ENCODE measurements at regions of chr1 and their contacts with region 1.

Region 1: GRCh38 chr1:162381383-162381782 is at the start of gene C1orf226:
- DNase-seq: no peak
- H3K4me3 ChIP-seq: no peak within 1 kb of the TSS
- H3K27ac ChIP-seq: no peak within 1 kb of the TSS
- H3K4me1 ChIP-seq: 0 out of 7 replicates have a peak, but pooled peaks cover 0 to 1% (median 0%) of the 10 kb centered on the region in 4 experiments
- H3K27me3 ChIP-seq: no peaks in the 10 kb centered on the region
- CTCF ChIP-seq: no peak
- EP300 ChIP-seq: no peak
- POLR2A ChIP-seq: no peak
- RAD21 ChIP-seq: no peak
- total RNA-seq, gene C1orf226: 18.8 and 19.5 TPM in 2 replicates

Region 2: GRCh38 chr1:162367073-162367472 is 14.3 kb before region 1 on chr1:
- CTCF ChIA-PET with region 1: interaction called, 19 read pairs
- POLR2A ChIA-PET with region 1: interaction called, 6 read pairs
- DNase-seq: no peak
- H3K4me3 ChIP-seq: no peak overlapping the region
- H3K27ac ChIP-seq: no peak overlapping the region
- H3K4me1 ChIP-seq: no peaks in the 10 kb centered on the region
- H3K27me3 ChIP-seq: no peaks in the 10 kb centered on the region
- CTCF ChIP-seq: no peak
- EP300 ChIP-seq: no peak
- POLR2A ChIP-seq: no peak
- RAD21 ChIP-seq: no peak

Region 3: GRCh38 chr1:162444903-162445302 is 63.5 kb after region 1 on chr1:
- CTCF ChIA-PET with region 1: no interaction called
- POLR2A ChIA-PET with region 1: no interaction called
- DNase-seq: no peak
- H3K4me3 ChIP-seq: no peak overlapping the region
- H3K27ac ChIP-seq: no peak overlapping the region
- H3K4me1 ChIP-seq: no peaks in the 10 kb centered on the region
- H3K27me3 ChIP-seq: no peaks in the 10 kb centered on the region
- CTCF ChIP-seq: no peak
- EP300 ChIP-seq: no peak
- POLR2A ChIP-seq: no peak
- RAD21 ChIP-seq: no peak